ENCODE measurements at regions of chr7 and their contacts with region 1.

Region 1: DNA sequence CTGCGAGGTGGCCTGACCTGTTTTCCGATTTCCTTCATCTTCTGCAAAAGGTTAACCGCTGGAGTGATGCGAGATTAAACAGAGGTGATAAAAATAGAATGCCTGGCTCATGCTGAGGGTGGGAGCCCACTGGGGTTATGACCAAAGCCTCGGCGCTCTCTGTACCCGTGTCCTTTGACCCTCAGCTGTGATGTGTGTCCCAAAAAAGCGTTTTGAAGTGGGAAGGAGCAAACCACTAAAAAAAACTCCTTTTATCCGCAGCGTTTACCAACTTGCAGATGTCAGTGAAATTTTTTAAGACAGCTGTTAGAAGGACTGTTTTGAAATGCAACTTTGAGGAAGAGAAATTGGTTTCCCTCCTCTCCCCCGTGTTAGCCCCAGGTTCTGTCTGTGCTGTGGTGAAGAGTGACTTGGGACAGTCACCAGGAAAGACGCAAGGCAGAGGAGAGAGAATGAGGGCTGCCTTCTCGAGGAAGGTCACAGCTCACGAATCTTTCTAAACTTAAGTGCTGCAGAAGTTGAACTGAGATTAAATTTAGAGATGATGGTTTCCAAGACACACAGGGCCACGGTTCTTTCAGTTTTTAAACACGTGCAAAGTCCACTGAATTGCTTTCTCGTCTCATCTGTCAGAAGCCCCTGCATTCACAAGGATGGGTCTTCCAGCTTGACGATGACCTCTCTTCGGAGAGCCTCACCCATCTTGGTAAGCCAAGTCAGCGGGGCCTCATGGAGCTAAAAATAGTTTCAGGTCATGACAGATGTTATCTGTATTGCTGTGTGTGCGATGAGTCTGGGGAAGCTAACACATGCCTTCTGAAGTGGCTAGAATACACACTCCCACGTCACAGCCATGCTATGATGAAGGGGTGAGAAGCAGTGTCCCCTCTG is 27.6 kb downstream of the AMZ1 start:
- DNase-seq: peak; percentile 84
- ATAC-seq: peak; percentile 67
- H3K4me3 Mint-ChIP-seq: peak overlapping the region; percentile 26
- H3K27ac Mint-ChIP-seq: peak overlapping the region; percentile 70
- H3K4me1 Mint-ChIP-seq: peaks cover 70% of the 10 kb centered on the region
- H3K27me3 Mint-ChIP-seq: peaks cover 28% of the 10 kb centered on the region
- CTCF ChIP-seq: no peak

Region 2: DNA sequence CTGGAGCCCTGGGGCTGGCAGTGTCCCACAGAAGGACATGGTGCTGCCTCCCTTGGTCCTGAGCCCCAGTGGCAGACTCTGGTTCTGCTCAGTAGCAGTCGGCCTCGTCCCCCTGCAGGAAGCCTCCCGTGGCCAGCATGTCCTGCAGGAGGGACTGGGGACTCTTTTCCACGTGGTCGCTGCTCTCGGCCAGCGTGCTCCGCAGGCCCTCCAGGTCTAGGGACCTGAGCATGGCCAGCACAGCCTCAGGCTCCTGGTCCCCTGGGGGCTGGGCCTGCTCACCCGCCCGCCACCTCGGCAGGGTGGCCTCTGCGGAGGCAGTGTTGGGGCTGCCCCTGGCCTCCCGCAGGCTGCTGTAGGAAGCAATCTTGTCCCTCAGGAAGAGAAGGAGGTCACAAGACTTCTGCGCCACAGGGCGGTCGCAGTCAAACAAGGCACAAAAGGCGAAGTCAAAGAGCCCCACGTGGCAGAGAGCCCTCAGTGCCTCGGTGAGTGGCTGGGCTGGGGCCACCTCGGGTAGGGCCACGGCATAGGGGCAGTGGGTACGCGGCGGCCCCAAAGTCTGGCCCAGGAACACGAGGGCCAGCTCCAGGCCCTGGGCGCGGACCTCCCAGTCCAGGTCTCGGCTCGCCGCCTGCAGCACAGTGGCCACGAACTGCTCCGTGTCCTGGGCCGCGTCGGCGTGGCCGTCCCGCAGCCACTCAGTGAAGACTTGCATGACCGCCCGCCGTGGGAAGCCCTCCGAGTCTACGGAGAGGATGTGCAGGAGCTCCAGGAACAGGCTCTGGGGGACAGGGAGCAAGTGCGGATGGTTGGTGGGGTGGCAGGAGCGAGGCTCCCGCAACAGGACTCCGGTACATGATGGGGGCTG is 177.4 kb before region 1 on chr7:
- CTCF ChIA-PET with region 1: no interaction called
- POLR2A ChIA-PET with region 1: no interaction called
- intact Hi-C with region 1: no loop called
- DNase-seq: no peak
- ATAC-seq: no peak
- H3K4me3 Mint-ChIP-seq: no peak overlapping the region
- H3K27ac Mint-ChIP-seq: no peak overlapping the region
- H3K4me1 Mint-ChIP-seq: no peaks in the 10 kb centered on the region
- H3K27me3 Mint-ChIP-seq: no peaks in the 10 kb centered on the region
- CTCF ChIP-seq: no peak

Region 3: DNA sequence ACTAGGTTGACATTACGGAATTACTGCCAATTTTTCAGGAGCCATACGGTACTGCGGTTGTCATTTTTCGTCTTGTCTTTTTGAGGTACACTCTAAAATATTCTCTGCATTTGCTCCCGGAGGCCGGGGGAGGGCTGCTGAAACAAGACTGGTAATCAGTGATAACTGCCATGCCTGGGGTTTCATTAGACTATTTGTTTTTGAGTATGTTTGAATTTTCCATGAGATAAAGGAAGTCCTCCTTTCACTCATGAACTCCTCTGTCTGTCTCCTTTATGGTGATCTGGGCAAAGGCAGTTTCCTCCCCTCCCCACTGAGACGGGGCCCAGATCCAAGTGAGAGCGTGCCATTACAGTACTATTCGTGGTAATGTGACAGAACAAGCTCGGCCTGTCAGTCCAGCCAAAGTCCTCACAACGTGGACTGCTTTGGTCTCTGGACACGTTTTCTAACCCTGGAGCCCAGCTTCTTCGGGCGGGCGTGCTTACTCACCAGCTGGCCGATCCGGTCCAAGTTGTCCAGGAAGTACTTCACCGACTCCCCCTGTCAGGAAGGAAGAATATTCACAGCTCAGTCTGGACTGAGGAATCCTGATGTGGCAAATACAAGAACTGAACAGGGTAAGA is 17.5 kb after region 1 on chr7:
- CTCF ChIA-PET with region 1: interaction called, 16 read pairs
- POLR2A ChIA-PET with region 1: interaction called, 3 read pairs
- intact Hi-C with region 1: no loop called
- DNase-seq: no peak
- ATAC-seq: no peak
- H3K4me3 Mint-ChIP-seq: no peak overlapping the region
- H3K27ac Mint-ChIP-seq: no peak overlapping the region
- H3K4me1 Mint-ChIP-seq: peaks cover 43% of the 10 kb centered on the region
- H3K27me3 Mint-ChIP-seq: no peaks in the 10 kb centered on the region
- CTCF ChIP-seq: no peak

Measured in activated CD8-positive, alpha-beta T cell treated with anti-CD3 and anti-CD28 coated beads for 36 hours (primary cell).